ENCODE measurements at regions of chr7 and their contacts with region 1.

Region 1: GRCh38 chr7:77657427-77658224 is 38.6 kb upstream of the RSBN1L start:
- DNase-seq: peak; percentile 39 to 49 (median 48)
- H3K4me3 ChIP-seq: no peak overlapping the region
- H3K4me3 Mint-ChIP-seq: no peak overlapping the region
- H3K27ac ChIP-seq: no peak overlapping the region
- H3K27ac Mint-ChIP-seq: peak overlapping the region in 1 of 7 donors; percentile 14
- H3K4me1 ChIP-seq: no peaks in the 10 kb centered on the region
- H3K4me1 Mint-ChIP-seq: no peaks in the 10 kb centered on the region
- H3K27me3 ChIP-seq: no peaks in the 10 kb centered on the region
- H3K27me3 Mint-ChIP-seq: no peaks in the 10 kb centered on the region

Region 2: GRCh38 chr7:77516085-77516484 is 141.5 kb before region 1 on chr7:
- CTCF ChIA-PET with region 1: no interaction called
- POLR2A ChIA-PET with region 1: no interaction called
- intact Hi-C with region 1: no loop called
- DNase-seq: no peak
- H3K4me3 ChIP-seq: no peak overlapping the region
- H3K4me3 Mint-ChIP-seq: no peak overlapping the region
- H3K27ac ChIP-seq: no peak overlapping the region
- H3K27ac Mint-ChIP-seq: no peak overlapping the region
- H3K4me1 ChIP-seq: no peaks in the 10 kb centered on the region
- H3K4me1 Mint-ChIP-seq: no peaks in the 10 kb centered on the region
- H3K27me3 ChIP-seq: no peaks in the 10 kb centered on the region
- H3K27me3 Mint-ChIP-seq: peaks cover 4 to 5% of the 10 kb centered on the region in 2 donors

Region 3: GRCh38 chr7:77685233-77685632 is 27.6 kb after region 1 on chr7:
- CTCF ChIA-PET with region 1: interaction called, 13 read pairs
- POLR2A ChIA-PET with region 1: no interaction called
- intact Hi-C with region 1: no loop called
- DNase-seq: no peak
- H3K4me3 ChIP-seq: no peak overlapping the region
- H3K4me3 Mint-ChIP-seq: no peak overlapping the region
- H3K27ac ChIP-seq: no peak overlapping the region
- H3K27ac Mint-ChIP-seq: peak overlapping the region in 2 of 7 donors; percentile 0 to 35
- H3K4me1 ChIP-seq: peaks cover 21% of the 10 kb centered on the region
- H3K4me1 Mint-ChIP-seq: peaks cover 18 to 32% (median 24%) of the 10 kb centered on the region in 4 donors
- H3K27me3 ChIP-seq: no peaks in the 10 kb centered on the region
- H3K27me3 Mint-ChIP-seq: no peaks in the 10 kb centered on the region

Region 4: GRCh38 chr7:77752021-77752420 is 94.4 kb after region 1 on chr7:
- CTCF ChIA-PET with region 1: interaction called, 170 read pairs
- POLR2A ChIA-PET with region 1: interaction called, 5 read pairs
- intact Hi-C with region 1: no loop called
- DNase-seq: no peak
- H3K4me3 ChIP-seq: no peak overlapping the region
- H3K4me3 Mint-ChIP-seq: peak overlapping the region in 2 of 8 donors; percentile 41 to 46
- H3K27ac ChIP-seq: no peak overlapping the region
- H3K27ac Mint-ChIP-seq: peak overlapping the region in 6 of 7 donors; percentile 43 to 81 (median 64)
- H3K4me1 ChIP-seq: peaks cover 34% of the 10 kb centered on the region
- H3K4me1 Mint-ChIP-seq: peaks cover 44 to 70% (median 55%) of the 10 kb centered on the region in 4 donors
- H3K27me3 ChIP-seq: no peaks in the 10 kb centered on the region
- H3K27me3 Mint-ChIP-seq: no peaks in the 10 kb centered on the region

Region 5: GRCh38 chr7:77765906-77766800 is 108.5 kb after region 1 on chr7:
- CTCF ChIA-PET with region 1: interaction called, 176 read pairs
- POLR2A ChIA-PET with region 1: no interaction called
- intact Hi-C with region 1: no loop called
- DNase-seq: no peak
- H3K4me3 ChIP-seq: no peak overlapping the region
- H3K4me3 Mint-ChIP-seq: no peak overlapping the region
- H3K27ac ChIP-seq: no peak overlapping the region
- H3K27ac Mint-ChIP-seq: peak overlapping the region in 5 of 7 donors; percentile 21 to 80 (median 46)
- H3K4me1 ChIP-seq: peaks cover 10% of the 10 kb centered on the region
- H3K4me1 Mint-ChIP-seq: peaks cover 19 to 36% (median 22%) of the 10 kb centered on the region in 4 donors
- H3K27me3 ChIP-seq: no peaks in the 10 kb centered on the region
- H3K27me3 Mint-ChIP-seq: no peaks in the 10 kb centered on the region

Region 6: DNA sequence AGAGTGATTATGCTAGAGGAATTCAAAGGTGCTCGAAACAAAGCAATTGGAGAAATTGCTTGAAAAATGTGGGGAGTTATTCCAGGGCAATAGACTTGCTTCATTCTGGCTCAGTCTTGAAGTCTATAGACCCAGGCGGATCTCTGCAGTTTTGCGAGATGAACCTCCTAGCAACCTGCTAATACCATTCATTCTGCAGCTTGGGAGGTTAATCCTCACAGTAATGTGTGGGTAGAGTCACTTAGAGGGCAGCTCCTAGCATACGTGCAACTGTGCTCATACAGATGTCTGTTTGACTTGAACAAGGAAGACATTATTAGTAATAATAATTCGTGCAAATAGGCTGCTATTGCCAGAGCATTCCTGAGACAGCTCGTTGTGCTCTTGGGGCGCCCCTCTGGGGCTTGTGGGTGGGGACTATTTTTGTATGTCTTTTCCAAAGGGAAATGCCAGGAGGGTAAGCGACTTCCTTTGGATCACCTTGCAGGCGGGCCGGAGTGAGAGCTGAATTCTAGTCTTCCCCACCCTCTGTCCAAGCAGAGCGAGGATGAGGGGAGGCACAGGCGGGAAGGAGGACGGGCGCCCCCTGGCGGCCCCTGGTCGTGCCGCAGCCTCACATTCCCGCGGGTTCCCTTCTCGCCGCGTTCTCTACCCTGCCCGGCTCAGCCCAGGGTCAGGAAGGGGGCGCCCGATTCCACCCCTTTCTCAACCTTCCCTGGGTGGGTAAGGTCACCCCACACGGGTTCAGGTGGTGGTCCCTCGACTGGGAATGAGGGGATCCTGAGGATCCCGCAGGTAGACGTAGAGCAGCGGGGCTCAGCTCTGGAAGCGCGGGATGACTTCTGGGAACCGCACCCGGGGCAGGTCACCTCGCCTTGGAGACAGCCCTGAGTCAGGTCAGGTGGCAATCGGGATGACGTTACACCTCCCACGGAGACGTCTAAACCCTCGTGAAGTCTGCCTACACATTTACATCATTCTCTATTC is 382.5 kb after region 1 on chr7:
- CTCF ChIA-PET with region 1: interaction called, 86 read pairs
- POLR2A ChIA-PET with region 1: no interaction called
- intact Hi-C with region 1: loop called (anchors 2 kb)
- DNase-seq: peak in 4 of 5 donors; percentile 14 to 49 (median 40)
- H3K4me3 ChIP-seq: no peak overlapping the region
- H3K4me3 Mint-ChIP-seq: no peak overlapping the region
- H3K27ac ChIP-seq: no peak overlapping the region
- H3K27ac Mint-ChIP-seq: no peak overlapping the region
- H3K4me1 ChIP-seq: no peaks in the 10 kb centered on the region
- H3K4me1 Mint-ChIP-seq: peaks cover 0 to 8% (median 1%) of the 10 kb centered on the region in 4 donors
- H3K27me3 ChIP-seq: peaks cover 5% of the 10 kb centered on the region
- H3K27me3 Mint-ChIP-seq: peaks cover 3 to 18% of the 10 kb centered on the region in 2 donors

Measured in CD4-positive, alpha-beta memory T cell (primary cell).